Activated naive CD4-positive, alpha-beta T cell treated with anti-CD3 and anti-CD28 coated beads for 36 hours (primary cell): ENCODE measurements at regions of chr1 and their contacts with region 1.

Region 1: GRCh38 chr1:211578640-211579433 is at the start of gene SLC30A1:
- DNase-seq: peak; percentile 99
- H3K4me3 Mint-ChIP-seq: peak within 1 kb of the TSS; percentile 90
- H3K27ac Mint-ChIP-seq: peak within 1 kb of the TSS; percentile 75
- H3K4me1 Mint-ChIP-seq: peaks cover 31% of the 10 kb centered on the region
- H3K27me3 Mint-ChIP-seq: no peaks in the 10 kb centered on the region
- total RNA-seq, gene SLC30A1: 4.4 to 4.7 TPM

Region 2: DNA sequence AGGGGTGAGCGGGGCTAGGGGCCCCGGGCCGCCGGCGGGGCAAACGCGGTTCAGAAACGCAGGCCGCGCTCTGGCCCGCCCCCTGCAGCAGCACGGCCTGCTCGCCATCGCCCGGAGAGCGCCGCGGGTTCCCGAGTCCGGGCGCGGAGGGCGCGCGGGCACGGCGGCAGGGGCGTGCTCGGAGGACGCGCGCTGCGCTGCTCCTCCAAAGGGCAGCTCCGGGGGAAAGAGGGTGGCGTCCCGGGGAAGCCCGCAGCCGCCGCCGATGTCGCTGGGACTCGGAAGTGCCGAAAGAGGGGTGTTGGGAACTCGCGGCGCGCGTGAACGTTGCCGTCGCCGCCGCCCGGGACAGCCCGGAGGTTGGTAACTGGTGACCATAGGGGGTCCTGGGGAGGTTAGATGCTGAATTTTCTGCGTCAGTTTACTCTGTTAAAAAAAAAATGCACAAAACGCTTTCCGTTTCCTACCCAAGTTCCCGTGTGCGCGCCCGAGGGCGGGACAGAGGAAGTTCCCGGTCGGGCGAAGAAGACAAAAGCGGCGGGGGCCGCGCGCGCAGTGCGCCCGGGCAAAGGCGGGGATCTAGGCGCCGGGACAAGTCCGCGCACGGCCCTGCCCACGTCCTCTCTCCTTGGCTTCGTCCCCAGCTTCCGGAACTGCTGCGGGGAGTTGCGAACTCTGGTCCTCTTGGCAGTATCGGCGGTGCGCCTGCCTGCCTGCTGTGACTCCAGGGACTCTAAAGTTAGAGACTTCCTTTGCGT is 1249.9 kb before region 1 on chr1 and contains the start of gene HHAT:
- CTCF ChIA-PET with region 1: no interaction called
- intact Hi-C with region 1: loop called (anchors 1 kb)
- DNase-seq: peak; percentile 84
- H3K4me3 Mint-ChIP-seq: peak within 1 kb of the TSS; percentile 93
- H3K27ac Mint-ChIP-seq: peak within 1 kb of the TSS; percentile 95
- H3K4me1 Mint-ChIP-seq: peaks cover 41% of the 10 kb centered on the region
- H3K27me3 Mint-ChIP-seq: peaks cover 4% of the 10 kb centered on the region
- total RNA-seq, gene HHAT: 3.6 to 3.9 TPM

Region 3: GRCh38 chr1:211382714-211383480 is 195.9 kb before region 1 on chr1:
- CTCF ChIA-PET with region 1: no interaction called
- intact Hi-C with region 1: loop called (anchors 2 kb)
- DNase-seq: peak; percentile 80
- H3K4me3 Mint-ChIP-seq: peak overlapping the region; percentile 89
- H3K27ac Mint-ChIP-seq: peak overlapping the region; percentile 92
- H3K4me1 Mint-ChIP-seq: peaks cover 40% of the 10 kb centered on the region
- H3K27me3 Mint-ChIP-seq: no peaks in the 10 kb centered on the region

Region 4: GRCh38 chr1:211595419-211595818 is 16.6 kb after region 1 on chr1:
- CTCF ChIA-PET with region 1: no interaction called
- intact Hi-C with region 1: no loop called
- DNase-seq: no peak
- H3K4me3 Mint-ChIP-seq: no peak overlapping the region
- H3K27ac Mint-ChIP-seq: no peak overlapping the region
- H3K4me1 Mint-ChIP-seq: peaks cover 3% of the 10 kb centered on the region
- H3K27me3 Mint-ChIP-seq: no peaks in the 10 kb centered on the region

Region 5: DNA sequence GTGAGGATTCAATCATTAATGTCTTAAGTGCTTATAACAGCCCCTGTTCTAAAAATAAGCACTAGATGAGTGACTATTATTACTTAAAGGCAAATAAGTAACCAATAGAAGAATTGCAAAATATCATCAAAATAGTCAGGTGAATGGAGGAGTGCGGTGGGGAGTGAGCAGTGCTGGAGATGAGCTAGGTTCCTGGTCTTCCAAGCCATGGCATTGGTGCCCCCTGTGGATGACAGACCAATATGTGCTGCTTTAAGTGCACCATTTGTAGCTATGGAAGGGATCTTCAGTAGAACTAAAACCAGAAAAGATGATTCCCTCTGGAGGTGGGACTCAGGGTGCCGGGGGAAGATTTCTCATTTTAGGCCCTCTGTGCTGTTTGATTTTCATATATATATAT is 46.2 kb after region 1 on chr1:
- CTCF ChIA-PET with region 1: no interaction called
- intact Hi-C with region 1: loop called (anchors 1 kb)
- DNase-seq: peak; percentile 60
- H3K4me3 Mint-ChIP-seq: no peak overlapping the region
- H3K27ac Mint-ChIP-seq: no peak overlapping the region
- H3K4me1 Mint-ChIP-seq: peaks cover 10% of the 10 kb centered on the region
- H3K27me3 Mint-ChIP-seq: no peaks in the 10 kb centered on the region

Region 6: DNA sequence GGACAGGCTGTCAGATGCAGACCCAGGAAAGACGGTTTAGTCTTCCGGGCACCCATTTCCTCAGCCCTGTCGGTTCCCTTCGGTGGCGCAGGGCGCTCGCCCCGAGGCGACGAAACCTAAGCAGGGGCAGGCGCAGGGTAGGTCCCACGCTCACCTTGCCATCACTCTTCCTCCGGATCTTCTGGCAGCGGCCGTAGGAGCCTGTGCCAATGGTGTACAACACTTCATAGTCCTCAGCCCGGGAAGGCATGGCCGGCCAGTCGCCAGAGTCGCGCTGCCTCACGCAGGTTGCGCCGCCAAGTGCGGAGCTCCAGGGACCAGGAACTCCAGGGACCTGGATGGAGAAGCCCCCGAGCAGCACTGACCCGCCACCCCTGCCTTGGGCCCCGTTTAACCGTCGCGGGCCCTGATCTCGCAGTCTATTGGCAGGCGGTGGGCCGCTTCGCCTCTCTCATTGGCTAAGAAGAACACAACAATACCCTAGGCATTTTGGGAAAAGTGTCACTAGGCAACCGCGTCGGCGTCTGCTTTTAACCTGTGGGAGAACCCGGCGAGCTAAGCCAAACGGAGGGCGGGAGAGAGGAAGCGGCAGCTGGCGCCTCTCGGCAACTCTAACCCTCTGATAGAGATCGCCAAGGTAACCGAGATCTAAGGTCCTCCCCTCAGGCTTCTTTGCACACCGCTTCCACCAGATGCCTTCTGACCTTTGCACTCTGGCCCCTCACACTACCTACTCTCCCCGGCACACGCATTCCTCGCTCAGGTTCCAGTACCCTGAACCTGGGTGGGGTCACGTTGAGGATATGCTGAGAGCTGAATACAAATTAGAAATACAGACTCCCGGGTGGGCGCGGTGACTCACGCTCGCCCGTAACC is 96.6 kb after region 1 on chr1 and contains the start of gene NEK2:
- CTCF ChIA-PET with region 1: no interaction called
- intact Hi-C with region 1: loop called (anchors 1 kb)
- DNase-seq: peak; percentile 97
- H3K4me3 Mint-ChIP-seq: peak within 1 kb of the TSS; percentile 86
- H3K27ac Mint-ChIP-seq: peak within 1 kb of the TSS; percentile 76
- H3K4me1 Mint-ChIP-seq: peaks cover 7% of the 10 kb centered on the region
- H3K27me3 Mint-ChIP-seq: no peaks in the 10 kb centered on the region
- total RNA-seq, gene NEK2: 60.8 to 62.3 TPM

Region 7: DNA sequence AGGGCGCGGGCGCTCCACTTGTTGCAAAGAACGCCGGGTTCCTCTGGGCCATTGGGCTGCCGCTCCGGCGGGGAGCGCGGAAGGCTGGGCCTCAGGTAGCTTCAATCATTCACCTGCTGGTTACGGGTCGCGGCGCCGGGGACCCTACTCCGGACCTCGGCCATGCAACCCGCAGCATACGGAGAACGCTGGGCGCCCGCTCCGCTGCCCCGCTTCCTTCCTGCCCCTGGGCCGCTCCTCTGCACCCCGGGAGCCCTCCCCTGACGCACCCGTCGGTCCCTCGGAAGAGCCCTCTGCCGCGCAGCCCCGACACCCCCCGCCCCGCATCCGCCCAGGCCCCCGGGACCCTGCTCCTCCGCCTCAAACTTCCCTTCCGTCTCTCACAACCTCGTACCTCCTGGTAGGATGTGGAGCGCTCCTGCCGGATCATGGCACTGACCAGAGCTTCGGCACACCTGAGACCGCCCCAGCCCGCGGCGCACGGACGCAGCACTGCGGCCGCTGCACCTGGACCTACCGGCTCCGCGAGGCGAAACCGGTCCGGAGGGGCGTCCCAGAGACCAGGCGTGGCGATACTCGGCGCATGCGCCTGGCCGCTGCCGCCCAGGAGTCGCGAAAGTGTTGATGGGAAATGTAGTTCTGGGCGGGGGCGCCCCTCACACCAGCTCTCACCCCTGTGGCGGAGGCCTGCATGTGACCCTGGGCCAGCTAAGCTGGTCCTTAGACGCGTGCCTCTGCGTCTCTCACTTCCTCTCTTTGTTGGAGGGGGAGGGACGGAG is 835.7 kb after region 1 on chr1 and contains the start of gene PACC1:
- CTCF ChIA-PET with region 1: no interaction called
- intact Hi-C with region 1: loop called (anchors 1 kb)
- DNase-seq: peak; percentile 88
- H3K4me3 Mint-ChIP-seq: peak within 1 kb of the TSS; percentile 95
- H3K27ac Mint-ChIP-seq: peak within 1 kb of the TSS; percentile 72
- H3K4me1 Mint-ChIP-seq: peaks cover 23% of the 10 kb centered on the region
- H3K27me3 Mint-ChIP-seq: no peaks in the 10 kb centered on the region
- total RNA-seq, gene PACC1: 9.5 to 10.2 TPM